ENCODE measurements at regions of chr2 and their contacts with region 1.

Region 1: DNA sequence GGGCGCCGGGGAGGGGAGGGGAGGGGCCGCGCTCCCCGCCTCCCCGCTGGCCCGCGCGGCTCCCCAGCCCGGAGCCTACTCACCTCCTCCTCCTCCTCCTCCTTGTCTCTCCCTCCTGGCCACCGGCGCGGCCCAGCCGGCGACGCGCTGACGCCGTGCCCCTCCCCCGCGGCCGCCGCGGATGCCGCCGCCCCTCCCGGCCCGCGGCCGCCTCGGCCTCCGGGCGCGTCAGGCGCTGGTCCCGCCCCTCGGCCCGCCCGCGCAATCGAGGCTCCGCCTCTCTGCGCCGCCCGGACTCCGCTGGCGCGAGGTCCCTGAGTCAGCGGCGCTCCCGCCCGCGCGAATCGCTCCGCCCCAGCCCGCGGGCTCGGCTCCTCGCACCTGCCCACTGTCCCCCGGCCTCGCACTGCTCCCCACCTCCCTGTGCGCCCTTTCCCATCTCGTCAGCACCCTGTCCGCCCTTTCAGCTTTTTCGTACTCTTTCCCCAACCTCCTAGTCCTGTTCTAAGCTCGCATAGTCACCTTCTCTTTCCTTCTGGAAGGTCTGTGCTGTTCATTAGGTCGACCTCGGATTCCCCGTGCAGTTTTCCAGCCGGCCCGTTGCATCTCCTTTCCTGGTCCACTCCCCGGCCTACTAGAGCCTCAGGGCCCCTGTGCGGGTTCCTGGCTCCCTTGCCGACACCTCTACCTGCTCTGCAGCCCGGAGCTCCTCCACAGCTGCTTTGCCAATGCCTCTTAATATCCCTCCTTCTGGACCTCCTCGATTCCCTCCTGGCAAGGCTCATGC is 187.4 kb downstream of the ZEB2 start:
- DNase-seq: peak; percentile 94
- ATAC-seq: peak; percentile 88
- H3K4me3 ChIP-seq: peak overlapping the region; percentile 87
- H3K27ac ChIP-seq: peak overlapping the region; percentile 71
- H3K4me1 ChIP-seq: peaks cover 17% of the 10 kb centered on the region
- H3K27me3 ChIP-seq: no peaks in the 10 kb centered on the region
- CTCF ChIP-seq: no peak

Region 2: DNA sequence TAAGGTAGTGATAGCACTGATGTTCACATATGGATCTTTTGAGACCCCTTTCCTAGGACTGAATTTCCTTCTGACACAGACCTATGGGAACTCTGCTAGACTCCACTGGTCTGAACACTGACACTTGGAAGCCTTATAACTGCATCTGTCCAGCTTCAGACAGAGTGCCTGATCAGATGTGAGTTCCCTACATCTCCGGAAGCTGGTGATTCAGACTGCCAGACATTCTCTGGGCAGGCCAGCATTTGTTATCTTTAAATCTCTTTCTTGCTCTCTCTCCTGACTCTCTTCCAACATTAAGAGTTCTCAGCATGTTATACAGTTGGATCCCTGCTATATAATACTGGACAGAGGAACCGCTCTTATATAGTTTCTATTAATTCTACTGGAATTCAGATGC is 221.1 kb before region 1 on chr2:
- CTCF ChIA-PET with region 1: no interaction called
- POLR2A ChIA-PET with region 1: no interaction called
- intact Hi-C with region 1: loop called (anchors 10 kb)
- DNase-seq: peak; percentile 56
- ATAC-seq: peak; percentile 88
- H3K4me3 ChIP-seq: no peak overlapping the region
- H3K27ac ChIP-seq: no peak overlapping the region
- H3K4me1 ChIP-seq: peaks cover 20% of the 10 kb centered on the region
- H3K27me3 ChIP-seq: no peaks in the 10 kb centered on the region
- CTCF ChIP-seq: no peak

Region 3: DNA sequence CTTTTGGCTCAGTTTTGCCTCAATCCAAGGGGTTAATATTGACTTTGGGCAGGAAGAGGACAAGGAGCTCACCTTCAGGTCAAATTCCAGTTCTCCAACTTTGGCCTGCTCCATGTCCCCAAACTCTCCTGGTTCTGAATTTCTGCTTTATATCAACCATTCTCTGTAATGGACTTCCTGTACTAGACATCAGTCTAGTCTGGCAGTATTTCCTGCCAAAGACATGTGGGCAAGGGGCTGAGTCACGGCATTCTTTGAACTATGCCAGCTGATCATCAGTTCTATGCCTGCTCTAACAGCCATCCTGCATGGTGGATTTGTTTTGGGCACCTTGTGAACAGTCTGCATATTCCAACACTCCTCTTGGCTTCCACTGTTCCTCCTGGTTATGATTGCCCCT is 12.1 kb before region 1 on chr2:
- CTCF ChIA-PET with region 1: no interaction called
- POLR2A ChIA-PET with region 1: no interaction called
- intact Hi-C with region 1: no loop called
- DNase-seq: peak; percentile 78
- ATAC-seq: peak; percentile 80
- H3K4me3 ChIP-seq: no peak overlapping the region
- H3K27ac ChIP-seq: no peak overlapping the region
- H3K4me1 ChIP-seq: peaks cover 28% of the 10 kb centered on the region
- H3K27me3 ChIP-seq: no peaks in the 10 kb centered on the region
- CTCF ChIP-seq: no peak

Region 4: DNA sequence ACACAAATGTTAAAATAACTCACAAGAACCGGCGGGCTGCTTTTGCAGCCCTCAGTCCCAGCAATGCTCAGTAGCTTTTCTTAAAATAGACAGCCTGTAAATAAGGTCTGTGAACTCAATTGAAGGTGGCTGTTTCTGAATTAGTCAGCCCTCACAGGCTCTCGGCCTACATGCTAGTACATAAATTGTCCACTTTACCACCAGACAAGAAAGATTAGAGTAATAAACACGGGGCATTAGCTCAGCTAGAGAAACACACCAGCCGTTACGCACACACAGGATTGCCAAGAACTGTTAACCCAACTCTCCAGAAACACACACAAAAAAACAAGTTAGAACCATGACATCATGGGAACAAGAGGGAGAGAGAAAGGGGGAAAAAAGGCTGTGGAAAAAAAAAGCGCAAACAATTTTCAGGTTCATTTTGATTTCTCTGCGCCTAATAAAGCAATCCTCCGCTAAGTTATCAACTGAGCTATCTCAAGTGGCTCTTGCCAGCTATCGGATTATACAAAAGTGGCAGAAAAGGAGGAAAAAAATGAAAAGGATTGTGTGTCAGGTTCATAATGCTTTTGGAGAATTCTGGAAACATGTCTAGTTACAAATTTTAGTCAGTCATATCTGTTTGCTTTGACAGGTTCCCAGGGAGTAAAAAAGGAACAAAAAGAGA is 98.3 kb after region 1 on chr2:
- CTCF ChIA-PET with region 1: no interaction called
- POLR2A ChIA-PET with region 1: no interaction called
- intact Hi-C with region 1: loop called (anchors 10 kb)
- DNase-seq: no peak
- ATAC-seq: no peak
- H3K4me3 ChIP-seq: no peak overlapping the region
- H3K27ac ChIP-seq: no peak overlapping the region
- H3K4me1 ChIP-seq: peaks cover 13% of the 10 kb centered on the region
- H3K27me3 ChIP-seq: no peaks in the 10 kb centered on the region
- CTCF ChIP-seq: no peak

Region 5: DNA sequence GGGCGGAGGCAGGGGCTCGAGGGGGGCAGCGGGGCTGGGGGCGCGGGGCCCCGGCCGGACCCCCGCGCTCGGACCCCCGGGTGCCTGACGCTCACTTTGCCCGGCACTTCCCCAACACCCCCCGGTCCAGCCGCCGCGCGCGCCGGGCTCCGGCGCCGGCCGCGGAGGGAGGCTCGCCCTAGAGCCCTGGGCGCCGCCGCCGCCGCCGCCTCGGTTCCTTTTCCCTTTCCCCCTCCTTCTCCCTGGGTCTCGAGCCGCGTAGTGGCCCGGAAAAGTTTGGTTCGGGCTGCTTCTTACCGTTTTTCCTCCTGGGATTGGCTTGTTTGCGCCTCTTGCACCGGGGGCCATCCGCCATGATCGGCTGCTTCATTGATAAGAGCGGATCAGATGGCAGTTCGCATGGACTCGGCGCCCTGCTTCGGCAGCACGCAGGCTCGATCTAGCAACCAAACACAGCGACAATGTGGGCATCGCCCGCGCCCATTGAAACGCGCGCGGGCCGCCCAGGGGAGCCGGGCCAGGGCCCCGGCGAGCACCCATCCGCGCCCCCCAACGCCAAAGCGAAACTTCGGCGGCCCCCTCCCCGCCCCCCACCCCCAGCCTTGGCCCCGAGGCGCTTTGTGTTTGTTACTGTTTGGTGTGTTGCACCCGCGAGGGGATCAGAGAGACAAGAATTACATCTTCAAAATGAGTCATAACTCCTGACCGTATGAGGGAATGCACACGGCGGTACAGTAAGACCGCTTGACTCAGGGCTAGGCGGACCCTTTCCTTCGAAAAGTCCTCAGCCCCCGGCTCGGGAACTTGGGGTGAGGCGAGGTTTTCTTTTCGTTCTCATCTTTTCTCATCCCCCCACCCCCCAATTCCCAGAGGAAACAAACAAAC is 184.7 kb after region 1 on chr2:
- CTCF ChIA-PET with region 1: no interaction called
- POLR2A ChIA-PET with region 1: no interaction called
- intact Hi-C with region 1: loop called (anchors 5 kb)
- DNase-seq: peak; percentile 43
- ATAC-seq: peak; percentile 59; the same call in 1 of the 2 replicates
- H3K4me3 ChIP-seq: peak overlapping the region; percentile 62
- H3K27ac ChIP-seq: no peak overlapping the region
- H3K4me1 ChIP-seq: peaks cover 14% of the 10 kb centered on the region
- H3K27me3 ChIP-seq: peaks cover 40% of the 10 kb centered on the region
- CTCF ChIP-seq: no peak

Region 6: GRCh38 chr2:144529841-144530240 is 197.3 kb after region 1 on chr2:
- CTCF ChIA-PET with region 1: no interaction called
- POLR2A ChIA-PET with region 1: no interaction called
- intact Hi-C with region 1: loop called (anchors 5 kb)
- DNase-seq: peak; percentile 27
- ATAC-seq: peak; percentile 69
- H3K4me3 ChIP-seq: no peak overlapping the region
- H3K27ac ChIP-seq: 0 out of 2 replicates have a peak overlapping the region, but pooled peaks have one; percentile 50
- H3K4me1 ChIP-seq: peaks cover 22% of the 10 kb centered on the region
- H3K27me3 ChIP-seq: no peaks in the 10 kb centered on the region
- CTCF ChIP-seq: no peak

Region 7: GRCh38 chr2:144596073-144596871 is 263.7 kb after region 1 on chr2:
- CTCF ChIA-PET with region 1: no interaction called
- POLR2A ChIA-PET with region 1: no interaction called
- intact Hi-C with region 1: loop called (anchors 10 kb)
- DNase-seq: peak; percentile 83
- ATAC-seq: peak; percentile 97
- H3K4me3 ChIP-seq: peak overlapping the region; percentile 29; the same call in 1 of the 2 replicates
- H3K27ac ChIP-seq: peak overlapping the region; percentile 73
- H3K4me1 ChIP-seq: peaks cover 19% of the 10 kb centered on the region
- H3K27me3 ChIP-seq: no peaks in the 10 kb centered on the region
- CTCF ChIP-seq: no peak

Region 8: GRCh38 chr2:144659731-144660275 is 327.3 kb after region 1 on chr2:
- CTCF ChIA-PET with region 1: no interaction called
- POLR2A ChIA-PET with region 1: no interaction called
- intact Hi-C with region 1: loop called (anchors 10 kb)
- DNase-seq: peak; percentile 96
- ATAC-seq: peak; percentile 99
- H3K4me3 ChIP-seq: 0 out of 2 replicates have a peak overlapping the region, but pooled peaks have one; percentile 36
- H3K27ac ChIP-seq: peak overlapping the region; percentile 88
- H3K4me1 ChIP-seq: peaks cover 21% of the 10 kb centered on the region
- H3K27me3 ChIP-seq: no peaks in the 10 kb centered on the region
- CTCF ChIP-seq: no peak

Measured in PC-3 (cell line).